ENCODE measurements at regions of chr2 and their contacts with region 1.

Region 1: GRCh38 chr2:163345908-163346573 is 389.8 kb downstream of the FIGN start:
- DNase-seq: no peak
- H3K4me3 ChIP-seq: no peak overlapping the region
- H3K27ac ChIP-seq: no peak overlapping the region
- H3K4me1 ChIP-seq: peaks cover 0 to 19% (median 2%) of the 10 kb centered on the region in 4 donors
- H3K27me3 ChIP-seq: no peaks in the 10 kb centered on the region
- CTCF ChIP-seq: peak; percentile 60 to 75 (median 72)
- EP300 ChIP-seq: no peak
- POLR2A ChIP-seq: no peak

Region 2: GRCh38 chr2:162379719-162380580 is 966.1 kb before region 1 on chr2:
- in situ Hi-C with region 1: no loop called
- intact Hi-C with region 1: loop called (anchors 5 kb)
- DNase-seq: no peak
- H3K4me3 ChIP-seq: no peak overlapping the region
- H3K27ac ChIP-seq: no peak overlapping the region
- H3K4me1 ChIP-seq: no peaks in the 10 kb centered on the region
- H3K27me3 ChIP-seq: no peaks in the 10 kb centered on the region
- CTCF ChIP-seq: no peak
- EP300 ChIP-seq: no peak
- POLR2A ChIP-seq: no peak

Region 3: GRCh38 chr2:164430166-164430783 is 1084.2 kb after region 1 on chr2:
- in situ Hi-C with region 1: loop called in 1 of 4 experiments (anchors 25 kb)
- intact Hi-C with region 1: no loop called
- DNase-seq: no peak
- H3K4me3 ChIP-seq: no peak overlapping the region
- H3K27ac ChIP-seq: no peak overlapping the region
- H3K4me1 ChIP-seq: no peaks in the 10 kb centered on the region
- H3K27me3 ChIP-seq: peaks cover 4% of the 10 kb centered on the region
- CTCF ChIP-seq: peak in 3 of 5 experiments; percentile 19 to 36 (median 21)
- EP300 ChIP-seq: no peak
- POLR2A ChIP-seq: no peak

Measured in transverse colon (tissue), 4 donors.